ENCODE measurements at regions of chr2 and their contacts with region 1.

Region 1: DNA sequence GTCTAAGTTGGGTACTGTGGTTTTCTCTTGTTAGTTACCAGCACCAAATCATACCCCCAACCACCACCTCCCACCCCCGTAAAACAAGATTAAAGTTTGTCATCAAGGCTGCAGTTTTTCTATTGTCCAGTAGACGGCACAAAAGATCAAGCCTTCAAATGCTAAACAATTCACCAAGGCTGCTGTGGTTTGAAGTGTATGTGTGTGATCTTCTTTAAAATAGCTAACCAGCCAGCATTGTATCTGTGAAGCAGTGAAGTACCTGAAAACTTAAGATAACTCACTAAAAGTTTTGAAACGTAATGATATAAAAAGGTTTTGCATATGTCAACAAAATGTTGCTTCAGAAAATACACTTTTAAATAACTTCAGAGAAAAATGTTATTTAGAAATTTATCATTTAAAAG is 5.9 kb upstream of the MEIS1 start:
- DNase-seq: no peak
- ATAC-seq: no peak
- H3K4me3 Mint-ChIP-seq: no peak overlapping the region
- H3K27ac Mint-ChIP-seq: no peak overlapping the region
- H3K4me1 Mint-ChIP-seq: peaks cover 44% of the 10 kb centered on the region
- H3K27me3 Mint-ChIP-seq: peaks cover 100% of the 10 kb centered on the region
- CTCF ChIP-seq: peak; percentile 76

Region 2: DNA sequence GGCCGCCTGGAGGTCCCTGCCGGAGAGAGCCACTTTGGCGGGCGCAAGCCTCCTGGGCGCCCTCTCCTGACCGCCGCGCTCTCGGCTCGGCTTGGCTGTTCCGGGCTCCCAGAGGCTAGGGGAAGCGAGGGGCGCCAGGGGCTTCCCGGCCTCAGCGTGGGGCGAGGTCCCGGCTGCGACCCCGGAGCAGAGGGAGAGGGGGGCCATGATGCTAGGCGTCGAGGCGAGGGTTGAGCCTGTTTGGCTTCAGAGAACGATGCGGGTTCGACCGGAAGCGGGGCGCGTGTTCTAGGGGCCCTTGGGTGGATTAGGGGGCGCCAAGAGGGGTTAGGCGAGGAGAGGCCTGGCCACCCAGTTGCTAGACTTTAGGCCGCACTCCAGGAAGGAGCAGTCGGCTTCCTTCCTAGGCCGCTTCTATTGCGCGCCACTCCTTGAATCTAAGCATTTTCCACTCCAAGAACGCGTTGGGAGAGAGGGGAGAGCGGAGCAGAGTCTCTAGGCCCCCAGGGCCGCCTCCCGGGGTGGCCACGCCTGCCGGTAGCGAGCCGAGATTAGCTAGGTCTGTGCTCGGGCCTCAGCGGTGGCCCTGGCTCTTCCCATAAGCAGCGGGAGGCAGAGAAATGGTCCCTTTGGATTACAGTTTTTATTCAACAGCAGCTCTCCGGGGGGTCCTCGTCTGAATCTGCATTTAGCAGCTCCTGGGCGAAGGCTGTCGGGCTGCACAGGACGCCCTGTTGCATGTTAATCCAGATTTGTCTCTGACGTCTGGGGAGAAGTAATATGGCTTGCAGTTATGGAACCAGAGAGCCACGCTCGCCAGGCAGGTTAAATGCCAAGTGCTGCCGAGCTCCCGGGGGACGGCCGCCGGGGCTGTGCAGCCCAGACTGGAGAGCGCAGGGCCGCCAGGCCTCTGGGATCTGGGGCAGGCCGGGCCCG is 17.1 kb after region 1 on chr2:
- CTCF ChIA-PET with region 1: interaction called, 37 read pairs
- POLR2A ChIA-PET with region 1: interaction called, 4 read pairs
- DNase-seq: peak; percentile 62
- ATAC-seq: peak; percentile 74
- H3K4me3 Mint-ChIP-seq: peak overlapping the region; percentile 68
- H3K27ac Mint-ChIP-seq: no peak overlapping the region
- H3K4me1 Mint-ChIP-seq: peaks cover 37% of the 10 kb centered on the region
- H3K27me3 Mint-ChIP-seq: peaks cover 73% of the 10 kb centered on the region
- CTCF ChIP-seq: no peak

Region 3: GRCh38 chr2:66456183-66457041 is 27.3 kb after region 1 on chr2:
- CTCF ChIA-PET with region 1: no interaction called
- POLR2A ChIA-PET with region 1: no interaction called
- DNase-seq: no peak
- ATAC-seq: no peak
- H3K4me3 Mint-ChIP-seq: no peak overlapping the region
- H3K27ac Mint-ChIP-seq: no peak overlapping the region
- H3K4me1 Mint-ChIP-seq: no peaks in the 10 kb centered on the region
- H3K27me3 Mint-ChIP-seq: peaks cover 3% of the 10 kb centered on the region; the same call in 1 of the 2 replicates
- CTCF ChIP-seq: no peak

Measured in WTC11 (cell line).